ENCODE measurements at regions of chr1 and their contacts with region 1.

Region 1: GRCh38 chr1:111716333-111716732 is 22.9 kb downstream of the INKA2 start:
- DNase-seq: no peak
- ATAC-seq: no peak
- H3K4me3 ChIP-seq: no peak overlapping the region
- H3K4me3 Mint-ChIP-seq: no peak overlapping the region
- H3K27ac ChIP-seq: peak overlapping the region in 1 of 2 donors; percentile 32
- H3K27ac Mint-ChIP-seq: no peak overlapping the region
- H3K4me1 ChIP-seq: no peaks in the 10 kb centered on the region
- H3K4me1 Mint-ChIP-seq: no peaks in the 10 kb centered on the region
- H3K27me3 ChIP-seq: no peaks in the 10 kb centered on the region
- H3K27me3 Mint-ChIP-seq: no peaks in the 10 kb centered on the region
- CTCF ChIP-seq: no peak

Region 2: DNA sequence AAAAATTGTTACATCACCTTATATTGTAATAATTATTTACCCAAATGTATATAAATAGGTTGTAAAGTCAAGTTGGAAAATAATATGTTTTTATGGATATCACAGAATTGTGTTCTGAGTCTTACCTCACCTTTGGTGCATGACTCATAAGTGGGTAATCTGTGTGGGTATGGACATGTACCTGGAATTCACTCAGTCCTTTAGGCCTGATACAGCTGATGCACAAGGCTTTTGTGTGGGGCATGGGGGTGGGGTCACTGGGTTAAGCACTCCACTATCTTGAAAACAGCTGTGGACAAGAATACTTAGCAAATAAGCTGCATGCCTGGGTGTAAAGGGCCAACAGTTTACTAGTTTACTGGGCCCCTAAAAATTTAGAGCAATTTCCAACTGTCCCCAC is 11.6 kb before region 1 on chr1:
- CTCF ChIA-PET with region 1: interaction called, 31 read pairs
- POLR2A ChIA-PET with region 1: no interaction called
- intact Hi-C with region 1: no loop called
- DNase-seq: no peak
- ATAC-seq: no peak
- H3K4me3 ChIP-seq: no peak overlapping the region
- H3K4me3 Mint-ChIP-seq: no peak overlapping the region
- H3K27ac ChIP-seq: no peak overlapping the region
- H3K27ac Mint-ChIP-seq: no peak overlapping the region
- H3K4me1 ChIP-seq: peaks cover under 1 to 2% of the 10 kb centered on the region in 2 donors
- H3K4me1 Mint-ChIP-seq: peaks cover 2% of the 10 kb centered on the region
- H3K27me3 ChIP-seq: no peaks in the 10 kb centered on the region
- H3K27me3 Mint-ChIP-seq: no peaks in the 10 kb centered on the region
- CTCF ChIP-seq: no peak

Region 3: GRCh38 chr1:111739194-111739924 is 23.0 kb after region 1 on chr1 and contains the start of gene INKA2:
- CTCF ChIA-PET with region 1: interaction called, 97 read pairs
- POLR2A ChIA-PET with region 1: interaction called, 4 read pairs
- intact Hi-C with region 1: loop called (anchors 1 kb)
- DNase-seq: peak; percentile 89
- ATAC-seq: peak; percentile 75
- H3K4me3 ChIP-seq: peak within 1 kb of the TSS; percentile 67 to 81 (median 72)
- H3K4me3 Mint-ChIP-seq: peak within 1 kb of the TSS; percentile 97
- H3K27ac ChIP-seq: peak within 1 kb of the TSS; percentile 60 to 73
- H3K27ac Mint-ChIP-seq: peak within 1 kb of the TSS; percentile 91
- H3K4me1 ChIP-seq: peaks cover 15 to 25% of the 10 kb centered on the region in 2 donors
- H3K4me1 Mint-ChIP-seq: peaks cover 23% of the 10 kb centered on the region
- H3K27me3 ChIP-seq: peaks cover 0 to 39% (median 15%) of the 10 kb centered on the region in 4 experiments
- H3K27me3 Mint-ChIP-seq: peaks cover 6% of the 10 kb centered on the region
- CTCF ChIP-seq: no peak
- total RNA-seq, gene INKA2: 6.4 and 6.5 TPM in 2 replicates

Region 4: GRCh38 chr1:111755331-111756123 is 39.2 kb after region 1 on chr1 and contains the start of gene DDX20:
- CTCF ChIA-PET with region 1: interaction called, 102 read pairs
- POLR2A ChIA-PET with region 1: no interaction called
- intact Hi-C with region 1: loop called (anchors 1 kb)
- DNase-seq: peak; percentile 98
- ATAC-seq: peak; percentile 92
- H3K4me3 ChIP-seq: peak within 1 kb of the TSS; percentile 62 to 95 (median 74)
- H3K4me3 Mint-ChIP-seq: peak within 1 kb of the TSS; percentile 88
- H3K27ac ChIP-seq: peak within 1 kb of the TSS; percentile 91 to 96
- H3K27ac Mint-ChIP-seq: peak within 1 kb of the TSS; percentile 94
- H3K4me1 ChIP-seq: peaks cover 14 to 16% of the 10 kb centered on the region in 2 donors
- H3K4me1 Mint-ChIP-seq: peaks cover 31% of the 10 kb centered on the region
- H3K27me3 ChIP-seq: no peaks in the 10 kb centered on the region
- H3K27me3 Mint-ChIP-seq: no peaks in the 10 kb centered on the region
- CTCF ChIP-seq: peak; percentile 95
- total RNA-seq, gene DDX20: 22.3 and 24.6 TPM in 2 replicates